Activated CD4-positive, alpha-beta T cell treated with anti-CD3 and anti-CD28 coated beads for 36 hours (primary cell): ENCODE measurements at regions of chr12 and their contacts with region 1.

Region 1: DNA sequence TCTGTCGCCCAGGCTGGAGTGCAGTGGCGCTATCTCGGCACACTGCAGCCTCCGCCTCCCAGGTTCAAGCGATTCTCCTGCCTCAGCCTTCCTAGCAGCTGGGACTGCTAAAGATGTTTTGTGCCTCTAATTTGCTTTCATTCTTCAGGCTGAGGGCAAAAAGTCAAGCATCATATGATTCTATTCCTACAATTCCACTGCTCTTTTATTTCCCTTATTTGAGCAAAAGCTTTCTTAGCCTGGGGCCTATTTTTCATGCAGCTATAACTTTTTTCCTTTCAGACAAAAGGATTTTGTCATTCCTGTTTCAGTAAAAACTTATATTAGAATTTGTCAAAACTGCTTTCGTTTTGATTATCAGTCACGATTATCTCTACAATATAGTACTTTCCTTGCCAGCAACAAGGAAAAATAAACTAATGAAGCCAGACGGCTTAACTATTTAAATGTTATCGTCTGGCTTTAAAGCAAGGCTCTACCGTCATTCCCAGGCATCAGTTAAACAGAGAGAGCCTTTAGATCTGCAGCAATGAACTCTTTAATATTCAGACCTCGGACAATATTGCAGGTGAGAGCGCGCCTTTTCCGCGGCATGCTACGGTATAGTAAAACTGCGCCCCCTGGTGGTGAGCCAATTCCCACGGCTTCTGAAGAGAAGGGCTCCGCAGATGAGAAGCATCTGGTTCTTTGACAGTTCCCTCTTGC is 1.4 kb upstream of the SLC2A13 start:
- DNase-seq: peak; percentile 93
- ATAC-seq: peak; percentile 37
- H3K4me3 Mint-ChIP-seq: peak overlapping the region; percentile 45
- H3K27ac Mint-ChIP-seq: no peak overlapping the region
- H3K4me1 Mint-ChIP-seq: peaks cover 42% of the 10 kb centered on the region
- H3K27me3 Mint-ChIP-seq: peaks cover 24% of the 10 kb centered on the region

Region 2: DNA sequence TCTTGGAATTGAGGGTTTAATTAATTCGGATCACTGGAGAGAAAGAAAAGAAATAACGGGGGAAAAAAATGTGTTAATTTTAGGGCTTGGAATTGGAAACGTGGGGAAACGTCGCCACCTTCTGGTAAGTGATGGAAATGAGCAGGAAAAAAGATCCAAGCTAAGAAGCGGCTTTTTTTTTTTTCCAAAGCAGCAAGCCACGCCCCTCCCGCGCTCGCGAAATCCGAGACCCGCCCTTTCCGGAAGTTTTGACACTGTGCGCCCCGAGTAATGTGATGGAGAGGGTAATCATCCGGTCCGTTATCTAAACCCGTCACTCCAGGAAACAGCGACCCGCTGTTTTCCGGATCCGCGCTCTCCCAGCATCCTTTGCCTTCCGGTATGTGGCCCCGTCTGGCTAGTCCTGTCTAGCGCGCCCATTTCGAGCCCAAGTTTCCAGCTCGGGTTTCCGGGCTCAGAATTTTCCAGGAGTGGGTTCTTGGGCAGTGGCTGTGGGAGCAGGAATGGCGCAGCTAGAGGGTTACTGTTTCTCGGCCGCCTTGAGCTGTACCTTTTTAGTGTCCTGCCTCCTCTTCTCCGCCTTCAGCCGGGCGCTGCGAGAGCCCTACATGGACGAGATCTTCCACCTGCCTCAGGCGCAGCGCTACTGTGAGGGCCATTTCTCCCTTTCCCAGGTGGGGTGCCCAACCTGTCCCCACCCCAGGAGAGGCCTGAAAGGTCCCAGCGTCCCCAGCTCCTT is 1790.7 kb before region 1 on chr12 and contains the start of gene ALG10B:
- CTCF ChIA-PET with region 1: no interaction called
- POLR2A ChIA-PET with region 1: no interaction called
- intact Hi-C with region 1: loop called in 1 of 2 experiments (anchors 10 kb)
- DNase-seq: peak; percentile 94
- ATAC-seq: peak; percentile 100
- H3K4me3 Mint-ChIP-seq: peak within 1 kb of the TSS; percentile 89
- H3K27ac Mint-ChIP-seq: peak within 1 kb of the TSS; percentile 95
- H3K4me1 Mint-ChIP-seq: peaks cover 20% of the 10 kb centered on the region
- H3K27me3 Mint-ChIP-seq: no peaks in the 10 kb centered on the region
- total RNA-seq, gene ALG10B: 14.2 to 15.3 TPM

Region 3: DNA sequence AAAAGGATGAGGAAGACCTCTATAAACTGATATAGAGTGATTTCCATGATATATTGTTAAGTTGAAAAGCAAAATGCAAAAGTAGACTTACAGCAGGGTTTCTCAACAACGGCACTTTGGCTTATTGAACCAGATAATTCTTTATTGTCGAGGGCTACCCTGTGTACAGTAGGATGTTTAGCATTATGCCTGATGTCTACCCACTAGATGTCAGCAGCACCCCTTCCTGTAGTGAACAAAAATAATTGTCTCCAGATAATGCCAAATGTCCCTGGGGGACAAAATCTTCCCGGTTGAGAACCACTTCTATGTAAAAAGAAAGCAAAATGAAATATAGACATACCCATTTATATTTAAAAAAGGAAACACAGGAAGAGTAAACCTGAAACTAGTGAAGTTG is 520.0 kb before region 1 on chr12:
- CTCF ChIA-PET with region 1: no interaction called
- POLR2A ChIA-PET with region 1: no interaction called
- intact Hi-C with region 1: loop called in 1 of 2 experiments (anchors 10 kb)
- DNase-seq: peak; percentile 21
- ATAC-seq: peak; percentile 60
- H3K4me3 Mint-ChIP-seq: no peak overlapping the region
- H3K27ac Mint-ChIP-seq: no peak overlapping the region
- H3K4me1 Mint-ChIP-seq: peaks cover 4% of the 10 kb centered on the region
- H3K27me3 Mint-ChIP-seq: no peaks in the 10 kb centered on the region

Region 4: GRCh38 chr12:39764944-39765560 is 342.2 kb before region 1 on chr12:
- CTCF ChIA-PET with region 1: no interaction called
- POLR2A ChIA-PET with region 1: no interaction called
- intact Hi-C with region 1: loop called (anchors 1 kb)
- DNase-seq: no peak
- ATAC-seq: no peak
- H3K4me3 Mint-ChIP-seq: no peak overlapping the region
- H3K27ac Mint-ChIP-seq: no peak overlapping the region
- H3K4me1 Mint-ChIP-seq: no peaks in the 10 kb centered on the region
- H3K27me3 Mint-ChIP-seq: no peaks in the 10 kb centered on the region

Region 5: DNA sequence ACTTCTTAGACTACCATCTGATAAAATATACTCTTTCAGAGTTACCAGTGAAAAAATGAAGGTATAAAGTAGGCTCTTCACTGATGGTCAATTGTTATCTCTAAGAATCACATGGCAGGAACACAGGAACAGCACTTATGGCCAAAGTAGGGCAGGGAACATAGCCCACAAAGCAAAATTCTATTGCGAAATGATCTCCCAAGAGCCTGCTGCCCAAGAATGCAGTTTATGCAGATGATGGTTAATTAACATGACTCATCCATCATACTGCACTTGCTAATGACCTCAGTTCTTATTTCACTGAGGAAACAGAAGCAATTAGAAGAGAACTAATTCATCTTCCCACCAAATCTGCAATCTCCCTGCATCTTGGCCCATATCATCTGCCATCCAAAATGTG is 135.1 kb before region 1 on chr12:
- CTCF ChIA-PET with region 1: no interaction called
- POLR2A ChIA-PET with region 1: no interaction called
- intact Hi-C with region 1: no loop called
- DNase-seq: no peak
- ATAC-seq: no peak
- H3K4me3 Mint-ChIP-seq: no peak overlapping the region
- H3K27ac Mint-ChIP-seq: no peak overlapping the region
- H3K4me1 Mint-ChIP-seq: no peaks in the 10 kb centered on the region
- H3K27me3 Mint-ChIP-seq: no peaks in the 10 kb centered on the region

Region 6: GRCh38 chr12:40068416-40068815 is 38.8 kb before region 1 on chr12:
- CTCF ChIA-PET with region 1: no interaction called
- POLR2A ChIA-PET with region 1: no interaction called
- intact Hi-C with region 1: no loop called
- DNase-seq: no peak
- ATAC-seq: no peak
- H3K4me3 Mint-ChIP-seq: no peak overlapping the region
- H3K27ac Mint-ChIP-seq: no peak overlapping the region
- H3K4me1 Mint-ChIP-seq: no peaks in the 10 kb centered on the region
- H3K27me3 Mint-ChIP-seq: no peaks in the 10 kb centered on the region

Region 7: GRCh38 chr12:40117818-40118217 is 10.6 kb after region 1 on chr12:
- CTCF ChIA-PET with region 1: interaction called, 22 read pairs
- POLR2A ChIA-PET with region 1: interaction called, 6 read pairs
- intact Hi-C with region 1: no loop called
- DNase-seq: no peak
- ATAC-seq: no peak
- H3K4me3 Mint-ChIP-seq: no peak overlapping the region
- H3K27ac Mint-ChIP-seq: no peak overlapping the region
- H3K4me1 Mint-ChIP-seq: peaks cover 12% of the 10 kb centered on the region
- H3K27me3 Mint-ChIP-seq: peaks cover 17% of the 10 kb centered on the region

Region 8: GRCh38 chr12:40393031-40393430 is 285.8 kb after region 1 on chr12:
- CTCF ChIA-PET with region 1: no interaction called
- POLR2A ChIA-PET with region 1: no interaction called
- intact Hi-C with region 1: no loop called
- DNase-seq: no peak
- ATAC-seq: no peak
- H3K4me3 Mint-ChIP-seq: no peak overlapping the region
- H3K27ac Mint-ChIP-seq: no peak overlapping the region
- H3K4me1 Mint-ChIP-seq: no peaks in the 10 kb centered on the region
- H3K27me3 Mint-ChIP-seq: no peaks in the 10 kb centered on the region

Region 9: GRCh38 chr12:40587421-40587820 is 480.2 kb after region 1 on chr12:
- CTCF ChIA-PET with region 1: no interaction called
- POLR2A ChIA-PET with region 1: no interaction called
- intact Hi-C with region 1: no loop called
- DNase-seq: no peak
- ATAC-seq: no peak
- H3K4me3 Mint-ChIP-seq: no peak overlapping the region
- H3K27ac Mint-ChIP-seq: no peak overlapping the region
- H3K4me1 Mint-ChIP-seq: no peaks in the 10 kb centered on the region
- H3K27me3 Mint-ChIP-seq: no peaks in the 10 kb centered on the region